GM10248 (cell line): ENCODE measurements at regions of chr4 and their contacts with region 1.

Region 1: GRCh38 chr4:176123710-176124407 is 58.2 kb downstream of the WDR17 start:
- DNase-seq: peak; percentile 49
- CTCF ChIP-seq: peak; percentile 57

Region 2: DNA sequence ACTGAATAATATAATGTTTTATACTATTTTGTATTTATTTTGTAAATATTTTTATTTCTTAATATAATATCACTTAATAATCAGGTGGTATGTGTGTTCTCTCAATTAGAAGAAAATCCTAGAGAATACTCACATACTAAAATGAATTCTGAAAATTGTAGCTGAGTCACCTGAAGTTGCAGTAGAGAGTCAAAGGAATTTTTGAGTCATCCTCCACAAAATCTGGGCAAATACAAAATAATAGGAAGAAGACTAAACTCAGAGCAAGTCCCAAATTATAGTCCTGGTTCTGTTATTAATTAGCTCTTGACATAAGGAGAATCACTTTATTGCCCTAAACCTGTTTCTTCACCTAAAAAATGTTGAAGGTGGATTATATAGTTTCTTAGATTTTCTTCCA is 13.8 kb after region 1 on chr4:
- CTCF ChIA-PET with region 1: interaction called, 10 read pairs
- POLR2A ChIA-PET with region 1: no interaction called
- DNase-seq: no peak
- CTCF ChIP-seq: no peak

Region 3: DNA sequence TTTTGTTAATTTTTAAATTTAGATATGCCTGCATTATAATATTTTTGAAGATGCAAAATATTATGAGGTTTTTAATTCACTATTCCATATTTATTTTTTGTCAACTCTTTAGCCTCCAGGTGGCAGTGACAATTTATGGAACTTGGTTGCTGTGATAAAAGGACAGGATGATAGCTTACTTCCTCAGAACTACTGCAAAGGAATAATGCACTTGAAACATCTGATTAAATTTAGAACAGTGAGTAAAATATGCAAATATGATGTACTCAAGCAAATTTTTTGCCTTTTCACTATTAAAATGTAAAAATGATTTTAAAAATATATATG is 26.5 kb after region 1 on chr4:
- CTCF ChIA-PET with region 1: interaction called, 12 read pairs
- POLR2A ChIA-PET with region 1: no interaction called
- DNase-seq: peak; percentile 8
- CTCF ChIP-seq: no peak

Region 4: DNA sequence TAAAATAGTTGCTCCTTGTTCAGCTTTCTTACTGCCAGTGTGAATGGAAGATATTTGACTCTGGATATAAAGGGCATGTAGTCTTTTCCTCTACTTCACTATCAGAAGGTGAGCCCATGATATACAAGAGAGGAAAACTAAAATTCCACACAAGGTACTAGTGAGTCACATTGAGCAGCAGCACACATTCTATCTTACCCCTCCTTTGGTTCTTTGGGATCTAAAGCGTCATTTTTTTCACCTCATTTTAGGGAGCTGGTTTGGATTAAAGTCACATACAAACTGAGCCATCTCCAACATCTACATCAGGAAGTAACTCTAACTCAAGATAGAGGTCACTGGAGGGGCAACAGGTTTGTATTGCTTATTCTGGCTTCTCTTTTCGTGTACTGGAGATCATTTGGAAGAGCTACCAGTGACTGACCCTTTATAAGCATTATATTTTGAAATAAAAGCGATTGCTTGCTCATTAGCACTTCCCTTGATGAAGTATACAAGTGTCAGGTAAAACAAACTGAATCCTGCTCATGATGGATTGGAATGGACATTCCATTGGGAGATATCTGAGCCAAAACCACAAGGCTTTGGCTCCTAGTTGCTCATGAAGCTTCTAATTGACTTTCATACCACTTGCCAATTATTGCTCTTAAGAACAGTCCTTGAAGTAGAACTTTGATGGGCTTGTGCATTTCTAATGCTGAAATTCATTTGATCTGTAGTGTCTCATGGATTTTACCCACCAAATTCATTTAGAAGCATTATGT is 320.0 kb after region 1 on chr4:
- CTCF ChIA-PET with region 1: no interaction called
- POLR2A ChIA-PET with region 1: no interaction called
- DNase-seq: no peak
- CTCF ChIP-seq: no peak